ENCODE measurements at regions of chr15 and their contacts with region 1.

Region 1: GRCh38 chr15:76336254-76337058 is at the start of gene ISL2:
- DNase-seq: peak; percentile 85
- H3K4me3 ChIP-seq: peak within 1 kb of the TSS; percentile 3 to 56 (median 20)
- H3K27ac ChIP-seq: peak within 1 kb of the TSS; percentile 53 to 70 (median 60)
- H3K4me1 ChIP-seq: peaks cover 4 to 64% (median 52%) of the 10 kb centered on the region in 4 donors
- H3K27me3 ChIP-seq: peaks cover 86% of the 10 kb centered on the region
- CTCF ChIP-seq: no peak
- EP300 ChIP-seq: no peak
- POLR2A ChIP-seq: no peak
- total RNA-seq, gene ISL2: 1.3 to 1.4 TPM in 2 of 4 donors, not detected in the others

Region 2: DNA sequence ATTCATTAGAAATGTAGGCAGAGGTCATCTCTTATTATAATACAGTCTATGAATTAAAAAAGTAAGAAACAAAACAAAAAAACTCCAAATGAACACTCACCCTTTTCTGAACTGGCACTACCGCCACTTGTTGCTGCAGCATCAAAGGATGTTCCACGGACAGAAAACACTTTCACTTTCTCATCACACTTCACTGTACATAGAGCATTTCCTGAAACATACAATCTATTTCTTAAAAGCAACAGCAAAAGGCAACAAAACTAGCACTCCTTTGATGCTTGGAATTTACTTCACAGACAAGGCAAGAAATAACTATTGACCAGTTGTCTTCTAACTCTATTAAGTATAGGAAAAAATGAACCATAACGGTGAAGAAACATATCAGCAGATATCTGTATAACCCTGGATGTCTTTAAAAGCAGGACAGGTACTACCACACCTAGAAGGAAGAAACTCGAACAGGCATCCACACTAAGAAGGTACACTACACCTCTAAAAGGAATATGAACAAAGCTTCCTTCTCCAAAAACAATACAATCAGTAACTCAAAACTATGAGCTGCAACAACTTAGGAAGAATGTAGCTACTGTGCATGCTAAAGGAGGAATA is 50.1 kb before region 1 on chr15:
- in situ Hi-C with region 1: no loop called
- intact Hi-C with region 1: loop called (anchors 2 kb)
- DNase-seq: no peak
- H3K4me3 ChIP-seq: peak overlapping the region in 1 of 4 donors; percentile 11
- H3K27ac ChIP-seq: peak overlapping the region in 1 of 4 donors; percentile 37
- H3K4me1 ChIP-seq: peaks cover 0 to 12% (median 0%) of the 10 kb centered on the region in 4 donors
- H3K27me3 ChIP-seq: no peaks in the 10 kb centered on the region
- CTCF ChIP-seq: no peak
- EP300 ChIP-seq: no peak
- POLR2A ChIP-seq: no peak

Measured in transverse colon (tissue), 4 donors.